Naive thymus-derived CD4-positive, alpha-beta T cell (primary cell): ENCODE measurements at regions of chr3 and their contacts with region 1.

Region 1: DNA sequence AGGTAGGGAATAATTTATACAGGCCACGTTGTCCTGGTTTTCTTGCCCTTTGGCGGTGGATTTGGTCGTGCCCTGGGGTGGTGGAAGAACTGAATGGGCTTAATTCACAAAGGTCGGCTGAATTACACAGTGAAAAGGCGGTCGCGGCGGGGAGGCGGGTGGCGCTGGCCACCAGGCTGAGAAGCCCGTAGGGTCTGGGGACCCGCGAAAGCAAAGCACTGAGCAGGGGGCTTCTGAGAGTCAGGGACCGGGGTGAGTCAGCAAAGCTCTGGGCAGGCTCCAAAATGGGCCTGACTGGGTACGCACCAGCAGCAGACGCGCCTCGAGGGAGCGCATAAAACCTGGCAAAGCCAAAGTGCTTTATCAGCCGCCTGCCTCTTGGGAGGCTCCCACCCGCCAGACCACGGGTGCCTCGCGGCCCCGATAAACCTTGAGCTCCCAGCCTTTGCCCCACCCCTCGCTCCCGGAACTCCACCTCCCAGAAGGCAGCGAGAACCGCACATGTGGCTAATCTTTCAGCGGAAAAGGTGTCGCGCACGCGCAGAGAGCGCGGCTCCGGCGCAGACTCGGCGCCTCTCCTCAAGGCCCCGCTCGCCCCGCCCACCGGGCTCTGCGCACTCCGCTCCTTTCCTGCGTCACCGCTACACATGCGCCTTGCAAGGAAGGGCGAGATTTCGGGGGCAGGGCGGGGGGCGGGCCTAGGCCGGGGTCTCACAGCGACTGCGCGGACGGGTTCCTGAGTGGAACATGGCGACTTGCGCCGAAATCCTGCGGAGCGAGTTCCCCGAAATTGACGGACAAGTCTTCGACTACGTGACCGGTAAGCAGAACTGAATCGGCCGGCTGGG is at the start of gene ABCF3:
- DNase-seq: peak; percentile 98 to 100 (median 99)
- ATAC-seq: peak; percentile 96
- H3K4me3 ChIP-seq: peak within 1 kb of the TSS; percentile 81
- H3K4me3 Mint-ChIP-seq: peak within 1 kb of the TSS; percentile 91 to 100 (median 98)
- H3K27ac ChIP-seq: peak within 1 kb of the TSS; percentile 89
- H3K27ac Mint-ChIP-seq: peak within 1 kb of the TSS; percentile 89 to 98 (median 97)
- H3K4me1 ChIP-seq: peaks cover 18 to 24% of the 10 kb centered on the region in 2 donors
- H3K4me1 Mint-ChIP-seq: peaks cover 31 to 52% (median 43%) of the 10 kb centered on the region in 7 donors
- H3K27me3 ChIP-seq: no peaks in the 10 kb centered on the region
- H3K27me3 Mint-ChIP-seq: no peaks in the 10 kb centered on the region
- total RNA-seq, gene ABCF3: 79.3 to 153 (median 117) TPM

Region 2: GRCh38 chr3:183455089-183455488 is 730.6 kb before region 1 on chr3:
- CTCF ChIA-PET with region 1: no interaction called
- POLR2A ChIA-PET with region 1: no interaction called
- intact Hi-C with region 1: no loop called
- DNase-seq: no peak
- ATAC-seq: no peak
- H3K4me3 ChIP-seq: no peak overlapping the region
- H3K4me3 Mint-ChIP-seq: no peak overlapping the region
- H3K27ac ChIP-seq: no peak overlapping the region
- H3K27ac Mint-ChIP-seq: no peak overlapping the region
- H3K4me1 ChIP-seq: no peaks in the 10 kb centered on the region
- H3K4me1 Mint-ChIP-seq: peaks cover 0 to under 1% (median 0%) of the 10 kb centered on the region in 7 donors
- H3K27me3 ChIP-seq: no peaks in the 10 kb centered on the region
- H3K27me3 Mint-ChIP-seq: no peaks in the 10 kb centered on the region

Region 3: GRCh38 chr3:184017672-184018423 is 167.8 kb before region 1 on chr3 and contains the start of gene ABCC5:
- CTCF ChIA-PET with region 1: interaction called, 3 read pairs
- POLR2A ChIA-PET with region 1: interaction called, 4 read pairs
- intact Hi-C with region 1: loop called in 1 of 2 experiments (anchors 1 kb)
- DNase-seq: peak; percentile 62 to 84 (median 79)
- ATAC-seq: peak; percentile 96
- H3K4me3 ChIP-seq: peak within 1 kb of the TSS; percentile 100
- H3K4me3 Mint-ChIP-seq: peak within 1 kb of the TSS; percentile 96 to 100 (median 99)
- H3K27ac ChIP-seq: peak within 1 kb of the TSS; percentile 72
- H3K27ac Mint-ChIP-seq: peak within 1 kb of the TSS; percentile 70 to 95 (median 91)
- H3K4me1 ChIP-seq: peaks cover 8 to 14% of the 10 kb centered on the region in 2 donors
- H3K4me1 Mint-ChIP-seq: peaks cover 11 to 33% (median 25%) of the 10 kb centered on the region in 7 donors
- H3K27me3 ChIP-seq: no peaks in the 10 kb centered on the region
- H3K27me3 Mint-ChIP-seq: peaks cover 5 to 15% (median 9%) of the 10 kb centered on the region in 5 donors
- total RNA-seq, gene ABCC5: 15.6 to 50.4 (median 25.5) TPM

Region 4: GRCh38 chr3:184154885-184155643 is 30.6 kb before region 1 on chr3 and contains the start of gene DVL3:
- CTCF ChIA-PET with region 1: no interaction called
- POLR2A ChIA-PET with region 1: interaction called, 3 read pairs
- intact Hi-C with region 1: loop called (anchors 1 kb)
- DNase-seq: peak in 7 of 9 donors; percentile 31 to 75 (median 39)
- ATAC-seq: peak; percentile 82
- H3K4me3 ChIP-seq: peak within 1 kb of the TSS; percentile 84
- H3K4me3 Mint-ChIP-seq: peak within 1 kb of the TSS; percentile 94 to 100 (median 96)
- H3K27ac ChIP-seq: peak within 1 kb of the TSS; percentile 60
- H3K27ac Mint-ChIP-seq: peak within 1 kb of the TSS; percentile 81 to 91 (median 87)
- H3K4me1 ChIP-seq: peaks cover 10 to 13% of the 10 kb centered on the region in 2 donors
- H3K4me1 Mint-ChIP-seq: peaks cover 14 to 39% (median 28%) of the 10 kb centered on the region in 7 donors
- H3K27me3 ChIP-seq: no peaks in the 10 kb centered on the region
- H3K27me3 Mint-ChIP-seq: no peaks in the 10 kb centered on the region
- total RNA-seq, gene DVL3: 32.0 to 45.3 (median 39.4) TPM

Region 5: DNA sequence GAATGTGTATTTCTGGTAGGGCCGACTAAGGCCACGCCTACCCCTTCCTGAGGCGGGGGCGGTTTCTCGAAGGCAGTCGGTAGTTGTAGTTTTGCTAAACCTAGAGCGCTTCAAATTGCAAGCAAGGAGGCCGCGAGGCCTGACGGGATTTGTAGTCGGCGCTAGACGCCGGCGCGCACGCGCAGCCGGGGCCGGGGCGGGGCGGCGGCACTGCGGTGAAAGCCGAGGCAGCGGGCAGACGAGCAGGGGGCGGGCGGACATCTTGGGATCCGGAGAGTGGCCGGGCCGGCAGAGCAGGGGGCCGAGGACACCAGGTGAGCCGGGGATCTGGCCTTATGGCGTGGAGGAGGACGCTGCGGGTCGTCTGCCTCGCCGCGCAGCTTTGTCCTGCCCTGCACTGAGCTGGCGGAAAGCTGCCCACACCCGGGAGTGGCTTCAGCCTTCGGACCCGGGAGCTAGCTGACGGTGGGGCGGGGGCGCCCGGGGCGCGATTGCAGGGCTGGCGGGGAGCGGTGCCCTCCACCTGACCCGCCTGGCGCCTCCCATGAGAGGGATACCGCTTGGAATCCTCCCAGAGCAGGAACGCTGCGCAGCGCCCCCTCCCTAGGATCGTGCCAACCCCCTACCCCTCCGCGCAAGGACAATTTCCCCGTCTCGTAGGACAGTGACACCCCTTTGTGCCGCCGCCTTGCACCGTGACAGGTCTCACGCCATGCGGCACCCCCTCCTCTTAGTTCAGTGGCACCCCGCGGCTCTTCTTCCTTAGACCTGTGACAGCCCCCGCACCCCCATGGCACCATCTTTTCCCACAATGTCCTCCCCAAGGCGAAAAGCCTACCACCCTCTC is 10.8 kb before region 1 on chr3 and contains the start of gene AP2M1:
- CTCF ChIA-PET with region 1: interaction called, 4 read pairs
- POLR2A ChIA-PET with region 1: interaction called, 15 read pairs
- intact Hi-C with region 1: loop called (anchors 1 kb)
- DNase-seq: peak; percentile 98 to 99 (median 98)
- ATAC-seq: peak; percentile 98
- H3K4me3 ChIP-seq: peak within 1 kb of the TSS; percentile 82
- H3K4me3 Mint-ChIP-seq: peak within 1 kb of the TSS; percentile 89 to 98 (median 96)
- H3K27ac ChIP-seq: peak within 1 kb of the TSS; percentile 95
- H3K27ac Mint-ChIP-seq: peak within 1 kb of the TSS; percentile 75 to 94 (median 90)
- H3K4me1 ChIP-seq: peaks cover 18 to 20% of the 10 kb centered on the region in 2 donors
- H3K4me1 Mint-ChIP-seq: peaks cover 14 to 46% (median 38%) of the 10 kb centered on the region in 7 donors
- H3K27me3 ChIP-seq: no peaks in the 10 kb centered on the region
- H3K27me3 Mint-ChIP-seq: no peaks in the 10 kb centered on the region
- total RNA-seq, gene AP2M1: 111 to 217 (median 185) TPM

Region 6: DNA sequence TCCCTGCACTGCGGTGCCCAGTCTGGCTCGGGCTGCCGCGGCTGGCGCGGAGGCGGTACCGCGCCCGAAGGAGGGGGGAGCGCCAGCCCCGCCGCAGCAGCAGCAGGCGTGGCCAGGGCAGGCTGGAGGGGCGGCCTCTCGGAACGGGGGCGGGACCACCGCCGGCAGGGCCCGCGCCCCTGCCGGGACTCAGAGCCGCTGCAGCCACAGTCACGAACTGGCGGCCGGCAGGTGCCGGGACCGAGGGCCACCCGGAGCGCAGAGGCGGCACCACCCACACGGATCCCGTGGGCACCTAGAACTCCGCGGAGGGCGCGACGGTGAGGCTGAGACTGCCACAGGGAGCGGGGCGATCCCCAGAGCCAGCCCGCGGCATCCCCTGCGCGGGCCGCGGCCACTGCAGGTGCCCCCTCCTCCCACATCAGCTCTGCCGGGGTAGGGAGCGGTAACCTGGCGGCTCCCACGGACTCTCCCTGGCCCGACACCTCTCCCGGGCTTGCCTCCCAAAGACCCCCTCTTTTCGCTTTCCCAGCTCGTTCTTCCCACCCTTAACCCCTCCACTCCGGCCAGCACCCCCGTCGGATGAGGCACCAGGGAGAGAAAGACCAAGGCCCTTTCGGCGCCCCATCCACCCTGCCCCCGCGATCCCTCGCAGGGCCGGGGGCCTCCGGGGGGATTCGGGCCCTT is 43.9 kb after region 1 on chr3 and contains the start of gene VWA5B2:
- CTCF ChIA-PET with region 1: no interaction called
- POLR2A ChIA-PET with region 1: no interaction called
- intact Hi-C with region 1: loop called in 1 of 2 experiments (anchors 5 kb)
- DNase-seq: peak; percentile 58 to 72 (median 66)
- ATAC-seq: peak; percentile 96
- H3K4me3 ChIP-seq: peak within 1 kb of the TSS; percentile 58
- H3K4me3 Mint-ChIP-seq: peak within 1 kb of the TSS; percentile 41 to 82 (median 74)
- H3K27ac ChIP-seq: no peak within 1 kb of the TSS
- H3K27ac Mint-ChIP-seq: no peak within 1 kb of the TSS
- H3K4me1 ChIP-seq: peaks cover 0 to 5% of the 10 kb centered on the region in 2 donors
- H3K4me1 Mint-ChIP-seq: peaks cover 8 to 14% (median 10%) of the 10 kb centered on the region in 7 donors
- H3K27me3 ChIP-seq: peaks cover 4 to 17% of the 10 kb centered on the region in 2 donors
- H3K27me3 Mint-ChIP-seq: peaks cover 46 to 65% (median 57%) of the 10 kb centered on the region in 5 donors
- total RNA-seq, gene VWA5B2: not detected

Region 7: GRCh38 chr3:184314363-184314699 is 128.6 kb after region 1 on chr3 and contains the start of gene EIF4G1:
- CTCF ChIA-PET with region 1: no interaction called
- POLR2A ChIA-PET with region 1: no interaction called
- intact Hi-C with region 1: loop called (anchors 1 kb)
- DNase-seq: peak; percentile 89 to 95 (median 91)
- ATAC-seq: peak; percentile 95
- H3K4me3 ChIP-seq: peak within 1 kb of the TSS; percentile 73
- H3K4me3 Mint-ChIP-seq: peak within 1 kb of the TSS; percentile 79 to 94 (median 88)
- H3K27ac ChIP-seq: peak within 1 kb of the TSS; percentile 93
- H3K27ac Mint-ChIP-seq: peak within 1 kb of the TSS; percentile 68 to 95 (median 89)
- H3K4me1 ChIP-seq: peaks cover 0 to 17% of the 10 kb centered on the region in 2 donors
- H3K4me1 Mint-ChIP-seq: peaks cover 15 to 35% (median 28%) of the 10 kb centered on the region in 7 donors
- H3K27me3 ChIP-seq: no peaks in the 10 kb centered on the region
- H3K27me3 Mint-ChIP-seq: no peaks in the 10 kb centered on the region
- total RNA-seq, gene EIF4G1: 200 to 341 (median 256) TPM